Activated CD8-positive, alpha-beta T cell treated with anti-CD3 and anti-CD28 coated beads, Interleukin-2, amount 10 ng/mL, durations not matched to agents 7 days and 5 days (primary cell): ENCODE measurements at regions of chr4 and their contacts with region 1.

Region 1: GRCh38 chr4:153142700-153143438 is 61.4 kb upstream of the TRIM2 start:
- DNase-seq: peak; percentile 61
- ATAC-seq: peak; percentile 74
- H3K4me3 Mint-ChIP-seq: no peak overlapping the region
- H3K27ac Mint-ChIP-seq: no peak overlapping the region
- H3K4me1 Mint-ChIP-seq: peaks cover 2% of the 10 kb centered on the region
- H3K27me3 Mint-ChIP-seq: peaks cover 22% of the 10 kb centered on the region

Region 2: DNA sequence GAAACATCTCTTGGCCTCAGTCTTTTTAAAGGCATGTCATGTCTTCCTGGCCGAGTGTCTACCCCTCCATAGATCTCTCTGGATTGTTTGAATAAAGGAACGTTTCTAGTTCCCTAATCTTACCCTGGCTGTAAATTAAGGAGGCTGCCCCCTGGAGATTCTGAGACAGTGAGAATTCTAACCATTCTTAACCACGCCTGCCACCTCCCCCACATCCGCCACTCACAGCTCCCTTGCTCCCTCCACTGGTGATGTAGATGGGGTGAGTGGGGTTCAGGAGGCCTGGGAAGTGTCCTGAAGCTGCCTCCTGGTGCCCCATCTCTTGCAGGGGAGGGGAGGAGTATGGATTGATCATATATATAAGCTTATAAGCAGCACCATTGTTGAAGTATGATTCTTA is 13.4 kb after region 1 on chr4:
- CTCF ChIA-PET with region 1: interaction called, 11 read pairs
- POLR2A ChIA-PET with region 1: no interaction called
- DNase-seq: peak; percentile 59
- ATAC-seq: no peak
- H3K4me3 Mint-ChIP-seq: no peak overlapping the region
- H3K27ac Mint-ChIP-seq: no peak overlapping the region
- H3K4me1 Mint-ChIP-seq: peaks cover 30% of the 10 kb centered on the region
- H3K27me3 Mint-ChIP-seq: peaks cover 42% of the 10 kb centered on the region